ENCODE measurements at regions of chr9 and their contacts with region 1.

Region 1: GRCh38 chr9:32384364-32385151 is at the start of gene ACO1:
- DNase-seq: peak; percentile 97
- H3K4me3 ChIP-seq: peak within 1 kb of the TSS; percentile 88 to 91
- H3K27ac ChIP-seq: peak within 1 kb of the TSS; percentile 50 to 65; a peak in 3 of 4 replicates
- H3K4me1 ChIP-seq: peaks cover 0 to 10% of the 10 kb centered on the region in 2 experiments; a peak in 2 of 4 replicates
- H3K27me3 ChIP-seq: no peaks in the 10 kb centered on the region
- CTCF ChIP-seq: no peak
- EP300 ChIP-seq: no peak
- RAD21 ChIP-seq: no peak
- polyA plus RNA-seq, gene ACO1: 25.4 and 33.7 TPM in 2 replicates

Region 2: GRCh38 chr9:32526041-32526706 is 141.6 kb after region 1 on chr9 and contains the start of gene RIGI:
- CTCF ChIA-PET with region 1: interaction called, 127 read pairs
- POLR2A ChIA-PET with region 1: interaction called, 4 read pairs
- DNase-seq: peak; percentile 64
- H3K4me3 ChIP-seq: peak within 1 kb of the TSS; percentile 70 to 79
- H3K27ac ChIP-seq: peak within 1 kb of the TSS; percentile 72 to 86
- H3K4me1 ChIP-seq: peaks cover 0 to 7% of the 10 kb centered on the region in 2 experiments; a peak in 3 of 4 replicates
- H3K27me3 ChIP-seq: no peaks in the 10 kb centered on the region
- CTCF ChIP-seq: peak; percentile 65
- EP300 ChIP-seq: no peak
- RAD21 ChIP-seq: peak; percentile 59
- polyA plus RNA-seq, gene RIGI: 1.5 and 2.5 TPM in 2 replicates

Region 3: GRCh38 chr9:32571969-32572899 is 187.7 kb after region 1 on chr9:
- CTCF ChIA-PET with region 1: interaction called, 620 read pairs
- POLR2A ChIA-PET with region 1: no interaction called
- DNase-seq: peak; percentile 79
- H3K4me3 ChIP-seq: peak overlapping the region; percentile 86 to 100
- H3K27ac ChIP-seq: peak overlapping the region; percentile 65 to 69
- H3K4me1 ChIP-seq: peaks cover 17 to 18% of the 10 kb centered on the region in 2 experiments; a peak in 3 of 4 replicates
- H3K27me3 ChIP-seq: no peaks in the 10 kb centered on the region
- CTCF ChIP-seq: peak; percentile 79
- EP300 ChIP-seq: no peak
- RAD21 ChIP-seq: peak; percentile 65